ENCODE measurements at regions of chrX and their contacts with region 1.

Region 1: GRCh38 chrX:1076871-1077651 is 135.4 kb downstream of the CRLF2 start:
- DNase-seq: no peak
- H3K4me3 Mint-ChIP-seq: peak overlapping the region; percentile 14
- H3K27ac Mint-ChIP-seq: no peak overlapping the region
- H3K4me1 Mint-ChIP-seq: peaks cover 5% of the 10 kb centered on the region
- H3K27me3 Mint-ChIP-seq: peaks cover 15% of the 10 kb centered on the region

Region 2: DNA sequence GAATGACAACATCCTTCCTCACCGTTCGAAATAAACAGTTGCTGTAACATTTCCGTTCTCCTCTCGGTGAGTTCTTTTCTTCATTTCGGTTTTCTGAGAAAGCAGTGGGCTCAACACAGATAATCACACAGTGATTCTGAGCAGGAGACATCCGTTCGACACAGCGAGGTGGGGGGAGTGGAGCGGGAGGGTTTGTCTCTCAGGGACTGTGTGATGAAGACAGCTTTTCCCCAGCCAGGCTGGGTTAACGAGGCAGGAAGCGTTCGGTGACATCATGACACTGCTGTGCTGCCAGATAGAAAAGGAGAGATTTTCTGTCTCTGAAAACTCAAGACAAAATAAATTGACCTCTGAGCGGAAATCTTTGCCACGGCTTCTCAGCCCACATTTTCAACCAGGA is 16.1 kb after region 1 on chrX:
- CTCF ChIA-PET with region 1: no interaction called
- intact Hi-C with region 1: loop called (anchors 2 kb)
- DNase-seq: peak; percentile 76
- H3K4me3 Mint-ChIP-seq: peak overlapping the region; percentile 67
- H3K27ac Mint-ChIP-seq: peak overlapping the region; percentile 91
- H3K4me1 Mint-ChIP-seq: peaks cover 13% of the 10 kb centered on the region
- H3K27me3 Mint-ChIP-seq: no peaks in the 10 kb centered on the region

Region 3: GRCh38 chrX:1178580-1179057 is 101.6 kb after region 1 on chrX:
- CTCF ChIA-PET with region 1: no interaction called
- intact Hi-C with region 1: no loop called
- DNase-seq: peak; percentile 11
- H3K4me3 Mint-ChIP-seq: no peak overlapping the region
- H3K27ac Mint-ChIP-seq: no peak overlapping the region
- H3K4me1 Mint-ChIP-seq: no peaks in the 10 kb centered on the region
- H3K27me3 Mint-ChIP-seq: no peaks in the 10 kb centered on the region